ENCODE measurements at regions of chr4 and their contacts with region 1.

Region 1: GRCh38 chr4:47704693-47705325 is 133.1 kb downstream of the CORIN start:
- DNase-seq: no peak
- ATAC-seq: peak; percentile 89
- H3K4me3 ChIP-seq: no peak overlapping the region
- H3K27ac ChIP-seq: no peak overlapping the region
- H3K4me1 ChIP-seq: no peaks in the 10 kb centered on the region
- H3K27me3 ChIP-seq: peaks cover 0 to 3% of the 10 kb centered on the region in 2 experiments; a peak in 2 of 4 replicates
- CTCF ChIP-seq: peak; percentile 44 to 51 (median 49); a peak in 4 of 6 replicates
- EP300 ChIP-seq: no peak
- POLR2A ChIP-seq: no peak
- RAD21 ChIP-seq: peak; percentile 65

Region 2: DNA sequence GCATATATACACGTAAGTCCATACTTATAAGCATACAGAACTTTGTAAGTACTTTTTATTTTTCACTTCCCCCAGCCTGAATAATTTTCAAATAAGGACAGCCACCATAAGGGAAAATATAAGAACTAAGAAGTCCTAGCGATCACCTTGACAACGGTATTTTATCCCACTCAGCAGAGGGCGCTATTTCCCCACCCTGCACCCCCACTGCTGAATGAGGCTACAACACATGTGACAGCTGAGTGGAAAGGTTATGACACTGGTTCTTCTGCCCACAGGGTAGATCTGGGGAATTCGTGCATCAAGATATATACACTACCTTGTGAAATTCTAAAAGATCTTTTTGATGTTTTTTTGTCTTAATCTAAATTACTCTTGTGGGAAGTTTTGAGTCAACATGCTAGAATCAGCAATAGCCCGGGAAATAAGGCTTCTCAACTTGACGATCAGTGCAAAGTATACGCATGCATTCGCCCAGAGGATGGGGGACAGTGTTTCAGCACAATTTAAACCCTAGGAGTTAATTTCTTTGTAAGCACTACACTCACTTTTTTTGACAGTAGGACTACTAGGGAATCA is 18.4 kb before region 1 on chr4:
- CTCF ChIA-PET with region 1: interaction called, 23 read pairs
- POLR2A ChIA-PET with region 1: no interaction called
- RAD21 ChIA-PET with region 1: interaction called, 3 read pairs
- SMC1A ChIA-PET with region 1: interaction called, 7 read pairs
- in situ Hi-C with region 1: no loop called
- intact Hi-C with region 1: no loop called
- DNase-seq: peak; percentile 13
- ATAC-seq: peak; percentile 92
- H3K4me3 ChIP-seq: no peak overlapping the region
- H3K27ac ChIP-seq: no peak overlapping the region
- H3K4me1 ChIP-seq: no peaks in the 10 kb centered on the region
- H3K27me3 ChIP-seq: no peaks in the 10 kb centered on the region
- CTCF ChIP-seq: peak; percentile 76 to 84 (median 79)
- EP300 ChIP-seq: no peak
- POLR2A ChIP-seq: no peak
- RAD21 ChIP-seq: peak; percentile 74

Region 3: GRCh38 chr4:47715716-47716416 is 11.1 kb after region 1 on chr4:
- CTCF ChIA-PET with region 1: interaction called, 5 read pairs
- POLR2A ChIA-PET with region 1: no interaction called
- RAD21 ChIA-PET with region 1: no interaction called
- SMC1A ChIA-PET with region 1: interaction called, 10 read pairs
- in situ Hi-C with region 1: no loop called
- intact Hi-C with region 1: no loop called
- DNase-seq: no peak
- ATAC-seq: no peak
- H3K4me3 ChIP-seq: no peak overlapping the region
- H3K27ac ChIP-seq: no peak overlapping the region
- H3K4me1 ChIP-seq: no peaks in the 10 kb centered on the region
- H3K27me3 ChIP-seq: no peaks in the 10 kb centered on the region; a peak in 1 of 4 replicates
- CTCF ChIP-seq: no peak
- EP300 ChIP-seq: no peak
- POLR2A ChIP-seq: no peak
- RAD21 ChIP-seq: no peak

Region 4: DNA sequence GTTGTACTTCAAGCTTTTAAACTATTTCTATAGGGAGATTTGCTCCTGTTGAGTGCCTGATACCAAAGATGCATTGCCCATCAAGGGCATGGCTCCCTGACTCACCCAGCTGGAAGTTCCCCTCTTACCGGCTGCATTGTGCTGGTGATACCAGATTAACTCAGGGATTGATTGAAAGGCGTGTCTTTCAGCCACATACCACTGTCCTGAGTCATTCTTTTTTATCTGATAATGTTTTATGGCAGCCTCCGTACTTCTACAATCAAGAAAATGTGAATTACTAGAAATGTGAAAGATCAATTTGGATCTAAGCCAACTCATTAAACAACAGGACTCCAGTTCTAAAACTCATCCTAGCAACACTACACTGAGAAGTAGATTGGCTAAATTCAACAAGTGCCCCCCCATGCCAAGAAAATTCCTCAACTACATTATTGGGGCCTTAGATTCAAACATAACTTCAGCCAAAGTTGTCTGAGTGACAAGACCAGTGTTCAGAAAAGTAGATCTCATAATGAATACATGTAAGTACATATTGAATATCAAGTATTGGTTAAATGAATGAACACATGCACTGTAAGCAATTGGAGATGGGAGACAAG is 389.2 kb after region 1 on chr4:
- CTCF ChIA-PET with region 1: no interaction called
- POLR2A ChIA-PET with region 1: no interaction called
- RAD21 ChIA-PET with region 1: no interaction called
- SMC1A ChIA-PET with region 1: no interaction called
- in situ Hi-C with region 1: loop called (anchors 10 kb)
- intact Hi-C with region 1: loop called (anchors 5 kb)
- DNase-seq: no peak
- ATAC-seq: no peak
- H3K4me3 ChIP-seq: no peak overlapping the region
- H3K27ac ChIP-seq: no peak overlapping the region
- H3K4me1 ChIP-seq: no peaks in the 10 kb centered on the region
- H3K27me3 ChIP-seq: no peaks in the 10 kb centered on the region
- CTCF ChIP-seq: no peak
- EP300 ChIP-seq: no peak
- POLR2A ChIP-seq: no peak
- RAD21 ChIP-seq: no peak